RWPE1 (cell line): ENCODE measurements at regions of chr6 and their contacts with region 1.

Region 1: GRCh38 chr6:305371-306206 is 13.3 kb downstream of the DUSP22 start:
- DNase-seq: no peak
- H3K27ac ChIP-seq: no peak overlapping the region
- CTCF ChIP-seq: no peak

Region 2: DNA sequence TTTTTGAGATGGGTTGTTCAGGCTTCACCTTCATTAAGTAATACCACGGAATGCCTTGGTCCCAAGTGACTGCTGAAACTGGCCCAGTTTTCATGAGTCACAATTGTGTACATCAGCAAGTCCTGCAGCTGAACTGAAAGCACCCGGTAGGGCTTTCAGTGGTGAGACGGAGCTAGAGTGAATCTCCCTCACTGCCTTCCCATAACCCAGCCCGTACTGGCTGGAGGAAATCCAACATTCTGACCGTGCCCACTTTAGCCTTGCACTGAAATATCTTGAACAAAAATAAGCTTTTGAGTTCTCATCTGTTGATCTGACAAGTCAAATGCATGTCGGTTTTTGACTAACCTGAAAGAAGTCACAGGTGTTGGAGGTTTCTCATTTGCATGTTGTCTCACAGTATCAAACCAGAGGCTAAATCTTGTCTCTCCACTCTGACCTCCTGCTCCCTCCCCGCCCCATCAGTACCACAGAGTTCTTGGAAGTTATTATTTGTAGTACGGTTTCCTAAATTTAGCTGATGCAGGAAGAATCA is 22.6 kb after region 1 on chr6:
- CTCF ChIA-PET with region 1: no interaction called
- POLR2A ChIA-PET with region 1: no interaction called
- DNase-seq: peak; percentile 64
- H3K27ac ChIP-seq: no peak overlapping the region
- CTCF ChIP-seq: no peak

Region 3: DNA sequence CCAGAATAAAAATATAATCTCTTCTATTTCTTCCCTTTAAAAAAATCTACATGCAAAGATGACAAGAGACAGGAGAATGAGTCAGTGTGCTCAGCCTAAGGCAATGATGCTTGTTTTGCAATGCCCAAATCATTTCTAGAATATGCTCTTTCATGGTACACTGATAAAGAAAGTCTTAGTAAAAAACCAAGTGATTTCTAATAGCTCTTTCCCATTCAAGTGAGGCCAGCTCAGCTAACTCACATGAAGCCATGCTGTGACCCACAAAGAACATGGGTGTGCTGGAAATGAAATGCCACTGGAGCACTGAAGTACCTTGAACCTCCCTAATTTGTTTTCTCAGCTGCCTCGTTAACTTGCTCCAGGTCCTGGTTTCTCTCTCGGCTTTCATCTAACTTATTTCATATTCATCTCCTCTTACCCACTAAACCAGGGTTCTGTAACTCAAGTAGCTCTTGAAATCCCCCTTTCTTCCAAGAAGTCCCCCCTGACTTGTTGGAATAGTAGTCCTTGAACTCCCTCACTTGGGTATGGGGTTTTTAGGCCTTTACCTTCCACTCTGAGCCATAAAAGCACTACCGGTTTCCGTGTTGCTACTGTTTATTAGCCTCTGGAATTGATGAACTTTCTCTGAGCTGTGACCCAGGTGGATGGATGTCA is 178.6 kb after region 1 on chr6:
- CTCF ChIA-PET with region 1: no interaction called
- POLR2A ChIA-PET with region 1: interaction called, 10 read pairs
- DNase-seq: no peak
- H3K27ac ChIP-seq: no peak overlapping the region
- CTCF ChIP-seq: no peak